Activated B cell treated with CpG ODN at 0.5 μM for 24 hours (primary cell): ENCODE measurements at regions of chr6 and their contacts with region 1.

Region 1: DNA sequence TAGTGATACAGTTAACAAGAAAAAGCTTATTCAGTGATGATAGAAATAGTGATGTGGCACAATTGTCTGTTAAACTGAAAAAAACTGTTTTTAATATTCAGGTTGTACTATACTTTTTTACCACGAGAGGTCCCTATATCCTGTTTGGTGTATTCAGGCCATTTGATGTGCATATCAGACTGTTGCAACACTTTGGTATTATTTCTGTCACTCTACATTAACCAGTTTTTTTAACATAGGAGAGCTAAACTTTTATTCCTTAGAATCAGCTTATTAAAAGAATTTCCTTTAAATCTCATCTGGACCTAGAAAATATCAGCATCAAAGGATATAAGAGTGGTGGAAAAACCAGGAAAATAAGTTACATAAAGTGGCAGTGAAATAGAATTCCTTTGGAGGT is 36.8 kb downstream of the TSPYL4 start:
- DNase-seq: no peak
- ATAC-seq: peak; percentile 28
- H3K4me3 Mint-ChIP-seq: no peak overlapping the region
- H3K27ac Mint-ChIP-seq: no peak overlapping the region
- H3K4me1 Mint-ChIP-seq: peaks cover 3% of the 10 kb centered on the region
- H3K27me3 Mint-ChIP-seq: no peaks in the 10 kb centered on the region
- CTCF ChIP-seq: no peak

Region 2: GRCh38 chr6:115969207-115969929 is 247.7 kb before region 1 on chr6:
- CTCF ChIA-PET with region 1: no interaction called
- POLR2A ChIA-PET with region 1: no interaction called
- intact Hi-C with region 1: no loop called
- DNase-seq: no peak
- ATAC-seq: no peak
- H3K4me3 Mint-ChIP-seq: no peak overlapping the region
- H3K27ac Mint-ChIP-seq: no peak overlapping the region
- H3K4me1 Mint-ChIP-seq: no peaks in the 10 kb centered on the region
- H3K27me3 Mint-ChIP-seq: peaks cover 4% of the 10 kb centered on the region
- CTCF ChIP-seq: no peak

Region 3: DNA sequence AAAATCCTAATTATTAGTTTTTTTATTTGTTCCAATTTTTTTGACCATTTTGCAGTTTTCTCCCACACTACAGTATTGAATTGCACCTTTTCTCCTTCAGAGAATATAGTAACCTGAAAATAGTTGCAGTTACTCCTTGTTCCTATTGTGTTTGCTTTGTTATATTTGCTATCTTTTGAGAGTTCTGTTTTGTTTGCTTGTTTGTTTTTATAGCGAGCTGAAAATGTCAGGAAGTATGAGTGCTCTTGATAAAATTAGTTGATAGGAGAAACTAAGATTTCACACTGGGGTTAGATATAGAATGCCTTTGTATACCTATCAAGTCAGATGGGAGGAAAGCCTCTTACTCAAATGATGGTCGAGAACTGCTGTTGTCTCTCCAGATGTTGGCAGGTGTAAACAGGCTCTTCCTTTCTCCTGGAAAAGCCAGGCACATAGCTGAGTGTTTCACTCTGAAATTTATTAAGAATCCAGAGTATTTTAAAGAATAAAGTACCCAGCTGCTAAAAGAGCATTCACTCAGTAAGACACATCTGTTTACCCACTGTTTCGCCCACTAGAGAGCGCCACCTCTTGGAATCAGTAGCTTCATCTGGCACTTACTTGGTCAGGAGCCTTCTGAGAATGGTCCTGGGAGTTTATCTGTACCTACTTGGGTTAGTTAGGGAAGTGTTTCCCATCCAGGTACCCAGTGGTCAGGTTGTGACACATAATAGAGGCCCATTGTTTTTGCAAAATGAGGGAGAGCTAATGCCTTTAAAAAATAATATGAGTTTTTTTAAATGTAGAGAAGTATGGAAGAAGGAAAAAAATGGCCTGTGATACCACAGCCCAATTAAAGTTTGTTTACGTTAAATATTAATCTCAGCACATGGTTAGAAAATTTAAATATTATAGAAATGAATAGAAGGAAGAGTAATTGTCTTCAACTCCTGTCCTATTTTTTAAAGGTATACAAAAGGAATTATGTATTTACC is 105.2 kb before region 1 on chr6:
- CTCF ChIA-PET with region 1: interaction called, 4 read pairs
- POLR2A ChIA-PET with region 1: no interaction called
- intact Hi-C with region 1: loop called (anchors 10 kb)
- DNase-seq: no peak
- ATAC-seq: no peak
- H3K4me3 Mint-ChIP-seq: no peak overlapping the region
- H3K27ac Mint-ChIP-seq: no peak overlapping the region
- H3K4me1 Mint-ChIP-seq: peaks cover 2% of the 10 kb centered on the region
- H3K27me3 Mint-ChIP-seq: no peaks in the 10 kb centered on the region
- CTCF ChIP-seq: no peak

Region 4: DNA sequence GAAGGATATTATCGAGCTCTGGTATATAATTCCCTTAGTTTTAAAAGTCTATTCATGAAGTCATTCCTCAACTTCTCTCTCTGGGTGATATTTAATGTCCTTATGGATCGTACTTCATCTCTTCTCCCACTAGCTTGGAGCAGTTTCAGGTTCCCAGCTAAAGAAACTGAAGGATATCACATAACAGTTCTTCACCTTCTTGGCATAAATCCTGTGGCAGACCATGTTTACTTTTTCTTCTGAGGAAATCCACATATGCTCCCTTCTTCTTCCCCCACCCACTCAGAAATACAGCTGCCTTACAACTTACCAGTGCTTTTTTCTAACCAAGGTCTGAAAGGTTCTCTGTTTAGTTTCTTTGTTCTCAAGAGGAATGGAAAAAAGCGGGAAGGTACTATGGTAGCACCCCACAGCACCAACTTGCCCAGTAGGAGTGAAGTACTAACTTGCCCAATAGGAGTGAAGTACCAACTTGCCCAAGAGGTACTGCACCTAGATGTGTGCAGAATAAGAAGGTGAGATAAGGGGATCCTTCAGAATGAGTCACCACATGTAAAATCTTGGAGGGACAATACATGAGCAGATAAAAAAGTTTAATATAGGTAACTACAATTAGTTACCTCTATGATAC is 16.3 kb before region 1 on chr6:
- CTCF ChIA-PET with region 1: no interaction called
- POLR2A ChIA-PET with region 1: no interaction called
- intact Hi-C with region 1: loop called (anchors 2 kb)
- DNase-seq: no peak
- ATAC-seq: no peak
- H3K4me3 Mint-ChIP-seq: no peak overlapping the region
- H3K27ac Mint-ChIP-seq: no peak overlapping the region
- H3K4me1 Mint-ChIP-seq: no peaks in the 10 kb centered on the region
- H3K27me3 Mint-ChIP-seq: no peaks in the 10 kb centered on the region
- CTCF ChIP-seq: no peak

Region 5: GRCh38 chr6:116268589-116269293 is 51.7 kb after region 1 on chr6:
- CTCF ChIA-PET with region 1: interaction called, 5 read pairs
- POLR2A ChIA-PET with region 1: no interaction called
- intact Hi-C with region 1: loop called (anchors 2 kb)
- DNase-seq: no peak
- ATAC-seq: peak; percentile 91
- H3K4me3 Mint-ChIP-seq: no peak overlapping the region
- H3K27ac Mint-ChIP-seq: no peak overlapping the region
- H3K4me1 Mint-ChIP-seq: peaks cover 17% of the 10 kb centered on the region
- H3K27me3 Mint-ChIP-seq: no peaks in the 10 kb centered on the region
- CTCF ChIP-seq: peak; percentile 28

Region 6: DNA sequence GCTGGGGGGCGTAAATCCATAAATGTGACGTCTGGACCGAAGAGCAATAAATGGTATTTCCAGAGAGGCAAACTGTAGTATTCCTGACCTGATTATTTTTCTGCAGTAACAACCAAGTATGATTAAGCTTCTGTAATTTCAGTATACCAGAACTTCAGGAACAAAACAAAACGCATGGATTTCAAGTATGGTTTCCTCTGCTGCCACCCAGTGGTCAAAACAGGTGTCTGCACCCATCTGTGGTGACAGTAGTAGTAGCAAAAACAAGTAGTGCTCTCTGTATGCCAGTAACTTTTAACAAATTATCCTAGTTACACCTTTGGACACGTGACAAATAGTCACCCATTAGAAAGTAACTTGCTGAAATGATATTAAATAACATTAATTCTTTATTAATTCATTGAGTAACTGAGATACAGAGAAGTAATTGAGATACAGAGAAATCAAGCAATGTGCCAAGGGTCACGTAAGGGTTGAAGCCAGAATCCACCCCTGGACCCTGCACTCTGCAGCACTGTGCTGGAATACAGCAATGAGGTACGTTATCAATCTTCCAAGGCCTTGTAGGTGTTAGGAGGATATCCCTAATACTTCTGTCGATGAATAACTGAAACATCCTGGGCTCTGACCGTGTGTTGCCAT is 344.4 kb after region 1 on chr6:
- CTCF ChIA-PET with region 1: interaction called, 20 read pairs
- POLR2A ChIA-PET with region 1: interaction called, 4 read pairs
- intact Hi-C with region 1: loop called (anchors 1 kb)
- DNase-seq: peak; percentile 37
- ATAC-seq: peak; percentile 81
- H3K4me3 Mint-ChIP-seq: no peak overlapping the region
- H3K27ac Mint-ChIP-seq: no peak overlapping the region
- H3K4me1 Mint-ChIP-seq: peaks cover 2% of the 10 kb centered on the region
- H3K27me3 Mint-ChIP-seq: peaks cover 14% of the 10 kb centered on the region
- CTCF ChIP-seq: peak; percentile 50

Region 7: GRCh38 chr6:116648156-116648555 is 431.1 kb after region 1 on chr6:
- CTCF ChIA-PET with region 1: no interaction called
- POLR2A ChIA-PET with region 1: no interaction called
- intact Hi-C with region 1: loop called (anchors 2 kb)
- DNase-seq: no peak
- ATAC-seq: no peak
- H3K4me3 Mint-ChIP-seq: no peak overlapping the region
- H3K27ac Mint-ChIP-seq: no peak overlapping the region
- H3K4me1 Mint-ChIP-seq: peaks cover 2% of the 10 kb centered on the region
- H3K27me3 Mint-ChIP-seq: no peaks in the 10 kb centered on the region
- CTCF ChIP-seq: no peak